PC-9 (cell line): ENCODE measurements at regions of chr10 and their contacts with region 1.

Region 1: GRCh38 chr10:104406715-104407650 is 53.4 kb downstream of the CFAP58 start:
- DNase-seq: peak in 1 of 2 experiments; percentile 41
- H3K4me3 ChIP-seq: no peak overlapping the region
- H3K27ac ChIP-seq: no peak overlapping the region
- H3K4me1 ChIP-seq: no peaks in the 10 kb centered on the region
- H3K27me3 ChIP-seq: peaks cover 16% of the 10 kb centered on the region
- CTCF ChIP-seq: peak; percentile 55

Region 2: GRCh38 chr10:104424719-104425118 is 17.7 kb after region 1 on chr10:
- CTCF ChIA-PET with region 1: no interaction called
- POLR2A ChIA-PET with region 1: no interaction called
- intact Hi-C with region 1: no loop called
- DNase-seq: no peak
- H3K4me3 ChIP-seq: no peak overlapping the region
- H3K27ac ChIP-seq: no peak overlapping the region
- H3K4me1 ChIP-seq: no peaks in the 10 kb centered on the region
- H3K27me3 ChIP-seq: peaks cover 10% of the 10 kb centered on the region
- CTCF ChIP-seq: no peak

Region 3: GRCh38 chr10:104614245-104614831 is 207.4 kb after region 1 on chr10:
- CTCF ChIA-PET with region 1: no interaction called
- POLR2A ChIA-PET with region 1: no interaction called
- intact Hi-C with region 1: loop called (anchors 2 kb)
- DNase-seq: peak in 1 of 2 experiments; percentile 25
- H3K4me3 ChIP-seq: no peak overlapping the region
- H3K27ac ChIP-seq: no peak overlapping the region
- H3K4me1 ChIP-seq: no peaks in the 10 kb centered on the region
- H3K27me3 ChIP-seq: no peaks in the 10 kb centered on the region
- CTCF ChIP-seq: peak; percentile 64

Region 4: GRCh38 chr10:104622598-104623209 is 215.7 kb after region 1 on chr10:
- CTCF ChIA-PET with region 1: interaction called, 5 read pairs
- POLR2A ChIA-PET with region 1: no interaction called
- intact Hi-C with region 1: loop called (anchors 1 kb)
- DNase-seq: peak in 1 of 2 experiments; percentile 24
- H3K4me3 ChIP-seq: no peak overlapping the region
- H3K27ac ChIP-seq: no peak overlapping the region
- H3K4me1 ChIP-seq: no peaks in the 10 kb centered on the region
- H3K27me3 ChIP-seq: no peaks in the 10 kb centered on the region
- CTCF ChIP-seq: peak; percentile 54

Region 5: GRCh38 chr10:104784452-104784851 is 377.5 kb after region 1 on chr10:
- CTCF ChIA-PET with region 1: no interaction called
- POLR2A ChIA-PET with region 1: no interaction called
- intact Hi-C with region 1: no loop called
- DNase-seq: no peak
- H3K4me3 ChIP-seq: no peak overlapping the region
- H3K27ac ChIP-seq: no peak overlapping the region
- H3K4me1 ChIP-seq: no peaks in the 10 kb centered on the region
- H3K27me3 ChIP-seq: no peaks in the 10 kb centered on the region
- CTCF ChIP-seq: no peak

Region 6: GRCh38 chr10:104925232-104925851 is 518.4 kb after region 1 on chr10:
- CTCF ChIA-PET with region 1: no interaction called
- POLR2A ChIA-PET with region 1: no interaction called
- intact Hi-C with region 1: loop called (anchors 10 kb)
- DNase-seq: peak in 1 of 2 experiments; percentile 4
- H3K4me3 ChIP-seq: no peak overlapping the region
- H3K27ac ChIP-seq: no peak overlapping the region
- H3K4me1 ChIP-seq: no peaks in the 10 kb centered on the region
- H3K27me3 ChIP-seq: no peaks in the 10 kb centered on the region
- CTCF ChIP-seq: peak; percentile 62